Activated CD4-positive, alpha-beta T cell treated with anti-CD3 and anti-CD28 coated beads, Interleukin-2, amount 10 ng/mL, durations not matched to agents 24 days and 14 days (primary cell): ENCODE measurements at regions of chr10 and their contacts with region 1.

Region 1: DNA sequence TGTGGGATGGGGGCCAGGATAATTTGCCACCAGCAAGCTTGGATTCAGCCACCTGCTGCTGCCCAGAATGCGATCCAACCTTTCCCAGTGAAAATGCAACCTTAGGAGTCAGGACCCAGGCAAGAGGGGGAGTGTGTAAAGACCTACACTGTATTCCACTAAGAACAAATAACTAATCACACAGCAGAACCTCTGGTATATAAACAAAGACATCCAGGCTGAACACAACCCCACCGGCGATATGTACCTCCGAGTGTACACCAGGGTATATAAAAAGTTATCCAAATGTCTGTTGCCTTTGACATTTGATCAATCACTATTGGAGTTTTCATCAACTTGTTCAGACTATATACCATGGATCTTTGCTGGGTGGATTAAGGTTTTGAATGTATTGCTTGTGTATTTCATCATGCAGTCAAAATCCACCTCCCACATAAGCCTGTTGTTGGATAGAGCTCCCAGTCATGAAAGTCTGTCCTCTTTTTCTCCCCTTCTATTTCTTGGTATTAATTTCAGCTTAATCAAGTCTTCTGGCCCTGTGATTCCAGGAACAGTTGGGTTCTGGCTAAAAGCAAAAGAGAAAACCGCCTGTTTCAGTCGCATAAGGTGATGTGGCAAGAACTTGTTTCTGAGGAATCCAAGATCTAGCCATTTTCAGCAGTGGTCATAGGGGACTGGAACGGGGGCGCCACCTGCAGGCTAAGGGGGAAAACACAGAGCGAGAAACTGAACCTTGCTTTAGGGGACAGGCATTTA is 290.7 kb downstream of the CCDC3 start:
- DNase-seq: peak; percentile 94
- H3K4me3 Mint-ChIP-seq: peak overlapping the region; percentile 29
- H3K27ac Mint-ChIP-seq: peak overlapping the region; percentile 59
- H3K4me1 Mint-ChIP-seq: peaks cover 54% of the 10 kb centered on the region
- H3K27me3 Mint-ChIP-seq: no peaks in the 10 kb centered on the region

Region 2: GRCh38 chr10:12121673-12122072 is 589.1 kb before region 1 on chr10:
- intact Hi-C with region 1: loop called (anchors 5 kb)
- DNase-seq: no peak
- H3K4me3 Mint-ChIP-seq: peak overlapping the region; percentile 79
- H3K27ac Mint-ChIP-seq: peak overlapping the region; percentile 97
- H3K4me1 Mint-ChIP-seq: peaks cover 27% of the 10 kb centered on the region
- H3K27me3 Mint-ChIP-seq: no peaks in the 10 kb centered on the region

Region 3: DNA sequence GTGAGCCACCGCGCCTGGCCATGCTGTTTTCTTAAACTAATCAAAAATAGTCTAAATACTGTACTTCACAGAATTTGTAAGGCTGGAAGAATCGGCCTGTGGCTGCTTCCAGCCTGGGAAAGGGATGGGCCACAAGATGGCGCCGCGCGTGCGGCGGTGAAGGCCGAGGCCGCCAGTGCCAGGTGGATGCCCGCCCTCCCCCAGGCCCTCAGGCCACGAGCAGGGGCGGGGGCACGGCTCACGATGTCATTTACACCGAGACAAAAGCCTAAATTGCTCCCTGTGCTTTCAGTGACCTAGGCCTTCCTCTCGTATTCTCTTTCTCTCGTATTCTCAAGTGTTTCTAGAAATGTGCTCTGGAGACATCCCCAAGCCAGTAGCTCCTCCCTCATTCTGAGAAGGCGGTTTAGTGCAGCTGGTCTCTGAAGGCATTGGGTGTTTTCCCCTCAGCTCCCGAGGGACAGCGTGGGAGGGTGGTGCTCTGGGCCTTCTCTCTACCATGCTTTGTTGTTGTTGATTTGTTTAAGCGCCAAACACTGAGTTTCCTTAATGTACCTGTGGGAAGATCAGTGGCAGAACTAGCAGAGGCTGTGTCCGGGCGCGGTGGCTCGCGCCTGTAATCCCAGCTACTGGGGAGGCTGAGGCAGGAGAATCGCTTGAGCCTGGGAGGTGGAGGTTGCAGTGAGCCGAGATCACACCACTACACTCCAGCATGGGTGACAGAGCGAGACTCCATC is 446.4 kb before region 1 on chr10:
- intact Hi-C with region 1: loop called (anchors 1 kb)
- DNase-seq: peak; percentile 89
- H3K4me3 Mint-ChIP-seq: peak overlapping the region; percentile 69
- H3K27ac Mint-ChIP-seq: peak overlapping the region; percentile 77
- H3K4me1 Mint-ChIP-seq: peaks cover 19% of the 10 kb centered on the region
- H3K27me3 Mint-ChIP-seq: no peaks in the 10 kb centered on the region

Region 4: GRCh38 chr10:12419262-12419847 is 291.4 kb before region 1 on chr10:
- intact Hi-C with region 1: loop called (anchors 5 kb)
- DNase-seq: peak; percentile 78
- H3K4me3 Mint-ChIP-seq: no peak overlapping the region
- H3K27ac Mint-ChIP-seq: peak overlapping the region; percentile 58
- H3K4me1 Mint-ChIP-seq: peaks cover 12% of the 10 kb centered on the region
- H3K27me3 Mint-ChIP-seq: peaks cover 2% of the 10 kb centered on the region

Region 5: GRCh38 chr10:12588120-12588860 is 122.5 kb before region 1 on chr10:
- intact Hi-C with region 1: loop called (anchors 5 kb)
- DNase-seq: peak; percentile 84
- H3K4me3 Mint-ChIP-seq: peak overlapping the region; percentile 76
- H3K27ac Mint-ChIP-seq: peak overlapping the region; percentile 74
- H3K4me1 Mint-ChIP-seq: peaks cover 55% of the 10 kb centered on the region
- H3K27me3 Mint-ChIP-seq: no peaks in the 10 kb centered on the region

Region 6: DNA sequence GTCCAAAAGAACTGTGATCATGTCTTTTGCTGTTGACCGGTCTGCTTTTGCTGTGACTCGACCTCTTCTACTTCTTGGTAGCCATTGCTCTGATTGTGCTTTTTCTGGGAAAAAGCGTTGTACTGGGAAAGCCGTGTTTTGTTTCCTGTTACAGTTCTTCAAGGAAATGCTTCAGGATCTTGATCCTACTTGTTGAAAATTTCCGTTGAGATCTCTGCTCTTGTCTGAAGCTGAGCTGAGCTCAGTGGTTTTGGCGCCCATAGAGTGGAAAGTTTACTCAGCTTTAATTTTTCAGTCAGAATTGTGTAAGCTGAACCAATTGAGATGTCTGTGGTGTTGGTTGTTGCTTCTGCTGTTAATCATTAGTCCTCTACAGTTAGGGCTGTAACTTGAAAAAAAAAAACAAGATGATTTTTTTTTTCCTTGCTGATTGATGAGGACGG is 11.5 kb before region 1 on chr10:
- intact Hi-C with region 1: loop called (anchors 1 kb)
- DNase-seq: peak; percentile 72
- H3K4me3 Mint-ChIP-seq: peak overlapping the region; percentile 24
- H3K27ac Mint-ChIP-seq: peak overlapping the region; percentile 87
- H3K4me1 Mint-ChIP-seq: peaks cover 20% of the 10 kb centered on the region
- H3K27me3 Mint-ChIP-seq: no peaks in the 10 kb centered on the region

Region 7: DNA sequence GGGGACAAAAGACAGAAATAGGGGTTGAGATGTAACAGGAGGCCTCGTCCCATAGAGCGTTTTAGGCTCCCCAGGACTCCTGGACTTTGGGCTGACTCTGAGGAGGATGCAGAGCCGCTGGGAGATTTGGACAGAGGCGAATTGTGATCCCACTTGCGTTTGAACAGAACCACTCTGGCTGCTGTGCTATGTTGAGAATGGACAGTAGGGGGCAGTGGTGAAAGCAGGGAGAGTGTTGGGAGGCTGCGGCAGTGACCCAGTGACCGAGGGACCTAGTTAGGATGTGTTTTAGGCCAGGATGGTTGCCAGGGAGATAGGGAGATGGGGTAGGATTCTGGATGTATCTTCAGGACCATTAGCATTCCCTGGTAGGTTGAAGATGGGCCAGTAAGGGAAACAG is 19.1 kb after region 1 on chr10:
- intact Hi-C with region 1: no loop called
- DNase-seq: no peak
- H3K4me3 Mint-ChIP-seq: no peak overlapping the region
- H3K27ac Mint-ChIP-seq: no peak overlapping the region
- H3K4me1 Mint-ChIP-seq: peaks cover 8% of the 10 kb centered on the region
- H3K27me3 Mint-ChIP-seq: no peaks in the 10 kb centered on the region

Region 8: DNA sequence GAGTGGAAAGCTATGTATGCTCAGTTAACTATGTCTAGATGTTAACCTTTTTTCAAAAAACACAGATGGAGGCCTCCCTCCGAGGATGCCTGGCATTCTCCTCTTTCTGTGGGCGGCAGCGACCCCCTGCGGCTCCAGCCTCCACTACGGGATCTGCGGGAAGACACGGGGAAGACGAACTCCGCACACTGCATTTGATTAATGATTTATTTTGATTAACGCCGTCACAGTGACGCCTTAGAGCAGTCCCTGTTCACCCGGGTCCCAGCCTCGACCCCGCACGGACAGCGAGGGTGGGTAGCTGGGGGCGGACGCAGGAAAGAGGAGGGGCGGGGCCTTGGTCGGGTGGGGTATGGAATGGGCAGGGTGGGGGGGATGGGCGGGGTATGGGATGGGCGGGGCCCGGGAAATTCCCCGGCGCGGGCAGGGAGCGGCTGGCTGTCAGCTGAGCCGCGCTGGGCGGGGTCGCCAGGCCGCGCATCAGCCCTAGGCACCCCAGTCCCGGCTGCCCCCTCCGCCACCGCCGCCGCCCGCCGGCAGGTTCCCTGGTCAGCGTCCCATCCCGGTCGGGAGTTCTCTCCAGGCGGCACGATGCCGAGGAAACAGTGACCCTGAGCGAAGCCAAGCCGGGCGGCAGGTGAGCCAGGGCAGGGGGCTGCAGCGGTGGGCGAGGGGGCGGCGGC is 389.0 kb after region 1 on chr10 and contains the start of gene OPTN:
- intact Hi-C with region 1: loop called (anchors 10 kb)
- DNase-seq: peak; percentile 93
- H3K4me3 Mint-ChIP-seq: peak within 1 kb of the TSS; percentile 92
- H3K27ac Mint-ChIP-seq: peak within 1 kb of the TSS; percentile 92
- H3K4me1 Mint-ChIP-seq: peaks cover 46% of the 10 kb centered on the region
- H3K27me3 Mint-ChIP-seq: no peaks in the 10 kb centered on the region
- total RNA-seq, gene OPTN: 39.5 and 43.6 TPM in 2 replicates